GM13976 (cell line): ENCODE measurements at regions of chr9 and their contacts with region 1.

Region 1: GRCh38 chr9:87336914-87337333 is 160.7 kb upstream of the DAPK1 start:
- DNase-seq: peak; percentile 57
- CTCF ChIP-seq: peak; percentile 16

Region 2: DNA sequence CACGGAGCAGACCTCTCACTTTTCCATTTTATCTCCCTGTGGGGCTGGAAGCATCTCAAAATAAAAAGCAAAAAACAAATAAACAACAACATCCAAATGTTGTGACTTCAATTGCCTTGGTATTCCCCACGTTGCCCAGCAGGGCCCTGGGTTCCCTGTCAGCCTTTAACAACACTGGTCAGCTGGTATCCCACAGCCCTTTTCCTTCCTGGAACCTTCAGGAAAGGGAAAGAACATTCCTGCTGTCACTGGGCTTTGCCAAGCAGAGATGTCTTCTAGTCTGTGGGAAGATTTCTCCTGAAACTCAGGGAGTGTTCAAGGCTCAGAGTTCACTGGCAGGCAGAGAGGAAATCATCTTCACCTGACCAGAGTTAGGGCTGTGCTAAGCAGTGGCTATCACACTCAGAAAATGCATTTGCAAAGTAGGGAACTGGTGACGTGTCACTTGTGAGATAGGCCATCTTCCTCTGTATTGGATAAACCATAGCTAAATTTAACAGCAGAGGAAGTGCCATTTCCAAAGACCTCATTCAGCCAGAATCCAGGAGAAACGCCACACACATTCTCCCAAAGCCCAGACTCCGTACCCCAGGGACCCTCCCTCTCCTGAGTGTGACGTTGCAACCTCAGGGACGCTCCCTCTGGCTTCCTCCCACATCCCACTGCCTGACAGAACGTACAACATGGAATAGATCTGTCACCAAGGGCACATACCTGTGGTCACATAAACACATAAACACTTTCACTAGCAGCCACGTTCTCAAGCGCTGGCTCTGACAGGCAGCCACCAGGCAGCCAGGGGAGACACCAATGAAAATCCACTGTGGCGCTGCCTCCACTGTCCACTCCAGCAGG is 113.3 kb before region 1 on chr9:
- in situ Hi-C with region 1: no loop called
- DNase-seq: no peak
- CTCF ChIP-seq: no peak

Region 3: GRCh38 chr9:87662808-87663528 is 326.0 kb after region 1 on chr9:
- in situ Hi-C with region 1: loop called (anchors 25 kb)
- DNase-seq: peak; percentile 80
- CTCF ChIP-seq: peak; percentile 72